Dorsolateral prefrontal cortex (tissue), 120 donors: ENCODE measurements at regions of chr20 and their contacts with region 1.

Region 1: DNA sequence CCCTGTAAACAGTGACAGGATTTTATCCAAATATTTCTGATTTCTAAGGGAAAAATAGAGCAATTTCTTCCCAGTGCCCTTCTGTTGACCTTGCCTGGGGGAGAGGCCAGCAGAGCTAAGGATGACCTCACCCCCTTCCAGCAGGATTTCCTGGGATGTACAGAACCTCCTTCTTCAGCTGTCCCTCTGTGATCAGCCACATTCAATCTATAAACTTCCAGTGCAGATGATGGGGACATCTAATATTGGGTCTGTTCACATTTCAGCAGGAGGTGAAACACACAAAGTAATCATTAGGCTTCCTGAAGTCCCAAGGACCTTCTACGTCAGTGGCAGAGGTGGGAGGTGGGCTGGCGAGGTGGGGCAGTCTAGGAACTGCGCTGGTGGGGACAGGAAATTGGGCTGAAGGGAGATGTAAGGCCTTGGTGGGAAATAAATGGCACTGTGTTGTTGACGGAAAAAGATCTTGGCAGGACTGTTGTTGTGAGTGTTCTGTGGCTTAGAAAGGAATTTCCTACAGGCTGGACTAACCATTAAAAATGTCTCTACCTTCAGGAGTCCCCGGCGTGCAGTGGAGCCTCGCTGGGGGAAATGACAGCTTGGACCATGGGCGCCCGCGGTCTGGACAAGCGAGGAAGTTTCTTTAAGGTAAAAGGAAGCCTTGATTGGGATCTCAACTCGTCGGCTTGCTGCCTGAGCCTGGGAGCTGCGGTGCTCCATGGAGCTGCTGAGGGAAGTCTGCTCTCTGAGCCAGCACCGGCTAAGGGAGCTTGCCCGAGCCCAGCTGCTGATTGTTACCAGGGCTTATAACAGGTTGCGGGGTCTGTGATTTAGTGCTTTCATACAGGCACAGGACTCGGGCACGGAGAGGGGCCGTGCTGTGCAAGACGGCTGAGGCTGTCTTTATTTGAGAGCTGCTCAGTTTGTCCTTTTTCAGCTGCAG is 127.9 kb upstream of the NAA20 start:
- DNase-seq: peak in 9 of 10 donors; percentile 41 to 62 (median 56)
- H3K4me3 ChIP-seq: peak overlapping the region; percentile 18 to 63 (median 45)
- H3K27ac ChIP-seq: peak overlapping the region; percentile 69 to 98 (median 92)
- H3K27me3 ChIP-seq: no peaks in the 10 kb centered on the region
- CTCF ChIP-seq: peak in 1 of 56 donors; percentile 8

Region 2: DNA sequence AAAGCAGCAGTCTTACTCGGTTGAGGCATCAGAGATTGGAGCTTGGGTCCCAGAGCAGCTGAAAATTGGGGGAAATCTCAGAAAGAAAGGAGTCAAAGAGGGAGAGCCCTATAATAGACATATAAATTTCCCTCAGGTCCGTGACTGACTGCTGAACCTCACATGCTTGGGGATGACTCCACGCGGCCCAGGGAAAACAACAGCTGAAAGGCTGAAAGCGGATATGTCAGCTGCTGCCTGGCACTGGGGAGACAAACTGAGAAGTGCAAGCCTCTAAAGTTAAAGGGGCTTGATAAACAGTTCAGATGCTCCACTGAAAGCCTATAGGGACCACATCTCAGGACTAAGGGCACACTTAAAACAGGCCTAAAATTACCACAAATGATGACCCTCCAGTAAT is 387.1 kb before region 1 on chr20:
- intact Hi-C with region 1: no loop called
- DNase-seq: no peak
- H3K4me3 ChIP-seq: no peak overlapping the region
- H3K27ac ChIP-seq: no peak overlapping the region
- H3K27me3 ChIP-seq: peaks cover 0 to 5% (median 0%) of the 10 kb centered on the region in 45 donors
- CTCF ChIP-seq: no peak

Region 3: DNA sequence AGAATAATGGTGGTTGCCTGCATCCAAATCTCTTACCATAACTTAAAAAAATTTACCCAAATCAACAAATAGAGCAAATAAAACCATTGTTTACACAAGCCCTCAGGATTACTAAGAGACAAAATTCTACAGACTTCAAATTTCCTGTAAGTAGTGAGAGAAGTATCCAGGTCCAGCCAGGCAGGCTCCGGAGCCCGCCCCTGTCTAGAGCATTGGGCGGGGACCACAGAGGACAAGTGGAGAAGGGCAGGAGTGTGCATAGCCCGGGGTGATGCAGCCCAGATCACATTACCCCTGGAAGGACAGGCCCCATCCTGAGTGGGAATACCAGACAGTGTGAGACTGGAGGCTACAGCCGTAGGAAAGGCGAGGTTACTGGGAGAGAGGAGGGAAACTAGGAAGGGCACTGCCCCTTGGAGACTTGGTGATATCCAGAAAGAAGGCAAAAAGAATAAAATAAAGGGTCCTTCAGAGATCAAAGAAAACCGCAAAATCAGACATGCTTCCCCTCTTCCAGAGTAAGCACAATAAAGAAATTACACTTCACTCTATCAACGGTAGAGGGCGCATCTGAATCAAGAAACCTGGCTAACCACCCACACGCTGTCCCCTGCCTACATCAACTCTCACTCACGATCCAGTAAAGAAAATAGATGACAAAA is 104.6 kb before region 1 on chr20:
- intact Hi-C with region 1: loop called (anchors 2 to 5 kb)
- DNase-seq: peak in 5 of 10 donors; percentile 22 to 70 (median 60)
- H3K4me3 ChIP-seq: peak overlapping the region in 19 of 59 donors; percentile 5 to 33 (median 18)
- H3K27ac ChIP-seq: peak overlapping the region in 53 of 59 donors; percentile 1 to 82 (median 69)
- H3K27me3 ChIP-seq: no peaks in the 10 kb centered on the region
- CTCF ChIP-seq: peak; percentile 63 to 94 (median 84)

Region 4: DNA sequence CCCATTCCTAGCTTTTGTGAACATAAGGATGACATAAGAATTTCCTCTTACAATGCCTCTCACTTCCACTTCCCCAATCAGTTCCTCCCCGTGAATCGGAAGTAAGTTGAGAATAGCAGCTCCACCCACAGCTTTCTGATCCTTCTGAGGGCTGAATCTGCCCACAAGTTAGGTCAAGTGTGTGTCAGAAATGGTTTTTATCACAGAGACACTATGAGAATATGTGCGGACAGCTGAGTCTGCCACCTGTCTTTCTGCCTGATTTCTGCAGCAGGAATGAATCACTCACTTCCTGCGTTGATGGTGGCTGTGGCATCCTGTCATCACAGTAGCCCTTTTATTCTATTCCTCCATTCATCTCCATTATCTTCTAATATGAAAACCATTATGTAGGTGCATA is 61.0 kb before region 1 on chr20:
- intact Hi-C with region 1: loop called in 1 of 2 experiments (anchors 10 kb)
- DNase-seq: peak in 1 of 10 donors; percentile 43
- H3K4me3 ChIP-seq: no peak overlapping the region
- H3K27ac ChIP-seq: peak overlapping the region in 2 of 59 donors; percentile 12 to 22
- H3K27me3 ChIP-seq: no peaks in the 10 kb centered on the region
- CTCF ChIP-seq: peak in 52 of 56 donors; percentile 16 to 73 (median 48)

Region 5: GRCh38 chr20:19835533-19836222 is 53.6 kb before region 1 on chr20:
- intact Hi-C with region 1: loop called in 1 of 2 experiments (anchors 5 kb)
- DNase-seq: peak; percentile 59 to 91 (median 83)
- H3K4me3 ChIP-seq: peak overlapping the region in 21 of 59 donors; percentile 0 to 32 (median 15)
- H3K27ac ChIP-seq: peak overlapping the region; percentile 0 to 94 (median 83)
- H3K27me3 ChIP-seq: no peaks in the 10 kb centered on the region
- CTCF ChIP-seq: peak in 25 of 56 donors; percentile 7 to 45 (median 25)

Region 6: GRCh38 chr20:19850198-19850533 is 39.1 kb before region 1 on chr20:
- intact Hi-C with region 1: no loop called
- DNase-seq: peak in 7 of 10 donors; percentile 41 to 67 (median 54)
- H3K4me3 ChIP-seq: peak overlapping the region in 12 of 59 donors; percentile 1 to 38 (median 22)
- H3K27ac ChIP-seq: peak overlapping the region; percentile 66 to 97 (median 94)
- H3K27me3 ChIP-seq: no peaks in the 10 kb centered on the region
- CTCF ChIP-seq: peak in 1 of 56 donors; percentile 3

Region 7: GRCh38 chr20:19934792-19935491 is 45.7 kb after region 1 on chr20:
- intact Hi-C with region 1: loop called in 1 of 2 experiments (anchors 5 kb)
- DNase-seq: peak in 8 of 10 donors; percentile 37 to 78 (median 68)
- H3K4me3 ChIP-seq: peak overlapping the region in 57 of 59 donors; percentile 29 to 73 (median 48)
- H3K27ac ChIP-seq: peak overlapping the region in 57 of 59 donors; percentile 30 to 91 (median 82)
- H3K27me3 ChIP-seq: no peaks in the 10 kb centered on the region
- CTCF ChIP-seq: peak in 6 of 56 donors; percentile 5 to 14 (median 11)

Region 8: DNA sequence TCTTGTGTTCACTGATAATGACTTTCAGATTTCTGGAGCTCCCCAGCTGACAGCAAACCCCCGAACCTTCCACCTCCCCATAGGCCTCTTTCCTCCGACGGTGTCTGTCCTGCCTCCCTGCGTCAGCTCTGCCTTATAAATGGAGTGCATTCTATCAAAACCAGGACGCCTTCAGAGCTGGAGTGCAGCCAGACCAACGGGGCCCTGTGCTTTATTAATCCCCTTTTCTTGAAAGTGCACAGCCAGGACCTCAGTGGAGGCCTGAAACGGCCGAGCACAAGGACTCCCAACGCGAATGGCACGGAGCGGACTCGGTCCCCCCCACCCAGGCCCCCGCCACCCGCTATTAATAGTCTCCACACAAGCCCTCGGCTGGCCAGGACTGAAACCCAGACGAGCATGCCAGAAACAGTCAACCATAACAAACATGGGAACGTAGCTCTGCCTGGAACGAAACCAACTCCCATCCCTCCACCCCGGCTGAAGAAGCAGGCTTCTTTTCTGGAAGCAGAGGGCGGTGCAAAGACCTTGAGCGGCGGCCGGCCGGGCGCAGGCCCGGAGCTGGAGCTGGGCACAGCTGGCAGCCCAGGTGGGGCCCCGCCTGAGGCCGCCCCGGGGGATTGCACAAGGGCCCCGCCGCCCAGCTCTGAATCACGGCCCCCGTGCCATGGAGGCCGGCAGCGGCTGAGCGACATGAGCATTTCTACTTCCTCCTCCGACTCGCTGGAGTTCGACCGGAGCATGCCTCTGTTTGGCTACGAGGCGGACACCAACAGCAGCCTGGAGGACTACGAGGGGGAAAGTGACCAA is 85.5 kb after region 1 on chr20:
- intact Hi-C with region 1: loop called (anchors 1 to 2 kb)
- DNase-seq: peak; percentile 56 to 86 (median 81)
- H3K4me3 ChIP-seq: peak overlapping the region; percentile 39 to 87 (median 69)
- H3K27ac ChIP-seq: peak overlapping the region; percentile 34 to 98 (median 95)
- H3K27me3 ChIP-seq: no peaks in the 10 kb centered on the region
- CTCF ChIP-seq: peak in 17 of 56 donors; percentile 3 to 34 (median 12)

Region 9: GRCh38 chr20:19995220-19995863 is 106.1 kb after region 1 on chr20:
- intact Hi-C with region 1: loop called in 1 of 2 experiments (anchors 5 kb)
- DNase-seq: peak in 3 of 10 donors; percentile 29 to 68 (median 55)
- H3K4me3 ChIP-seq: peak overlapping the region in 1 of 59 donors; percentile 2
- H3K27ac ChIP-seq: peak overlapping the region in 55 of 59 donors; percentile 7 to 89 (median 79)
- H3K27me3 ChIP-seq: no peaks in the 10 kb centered on the region
- CTCF ChIP-seq: peak; percentile 62 to 93 (median 86)